ENCODE measurements at regions of chr3 and their contacts with region 1.

Region 1: DNA sequence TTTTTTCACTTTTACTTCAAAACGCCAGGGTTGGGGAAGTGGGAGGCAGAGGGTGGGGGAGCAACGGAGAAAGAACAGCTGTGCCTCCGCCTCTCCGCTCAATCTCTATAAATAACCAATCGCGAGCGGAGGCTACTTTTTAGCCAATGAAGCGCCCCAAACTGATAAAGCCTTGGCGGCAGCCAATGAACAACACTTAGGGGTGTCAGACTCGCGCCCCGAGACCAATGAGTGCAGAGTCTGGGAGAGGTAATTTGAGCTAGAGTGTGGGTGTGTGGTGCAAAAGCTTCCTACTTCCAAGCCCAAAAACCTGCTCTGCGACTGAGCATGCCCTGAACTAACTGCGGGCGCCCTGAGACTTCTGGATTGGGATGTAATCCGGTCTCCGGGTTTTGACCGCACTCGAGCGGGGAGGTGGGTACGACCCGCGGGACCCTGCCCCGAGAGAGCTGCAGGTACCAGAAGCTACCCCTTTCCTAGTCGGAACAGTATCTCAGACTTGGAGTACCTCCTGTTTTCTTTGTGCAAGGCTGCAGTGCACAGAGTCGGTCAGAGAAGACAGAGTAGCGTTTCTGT is 800 bp upstream of the RAP2B start:
- DNase-seq: peak; percentile 95
- H3K4me3 Mint-ChIP-seq: peak overlapping the region; percentile 93
- H3K27ac Mint-ChIP-seq: peak overlapping the region; percentile 98
- H3K4me1 Mint-ChIP-seq: peaks cover 26% of the 10 kb centered on the region
- H3K27me3 Mint-ChIP-seq: no peaks in the 10 kb centered on the region

Region 2: DNA sequence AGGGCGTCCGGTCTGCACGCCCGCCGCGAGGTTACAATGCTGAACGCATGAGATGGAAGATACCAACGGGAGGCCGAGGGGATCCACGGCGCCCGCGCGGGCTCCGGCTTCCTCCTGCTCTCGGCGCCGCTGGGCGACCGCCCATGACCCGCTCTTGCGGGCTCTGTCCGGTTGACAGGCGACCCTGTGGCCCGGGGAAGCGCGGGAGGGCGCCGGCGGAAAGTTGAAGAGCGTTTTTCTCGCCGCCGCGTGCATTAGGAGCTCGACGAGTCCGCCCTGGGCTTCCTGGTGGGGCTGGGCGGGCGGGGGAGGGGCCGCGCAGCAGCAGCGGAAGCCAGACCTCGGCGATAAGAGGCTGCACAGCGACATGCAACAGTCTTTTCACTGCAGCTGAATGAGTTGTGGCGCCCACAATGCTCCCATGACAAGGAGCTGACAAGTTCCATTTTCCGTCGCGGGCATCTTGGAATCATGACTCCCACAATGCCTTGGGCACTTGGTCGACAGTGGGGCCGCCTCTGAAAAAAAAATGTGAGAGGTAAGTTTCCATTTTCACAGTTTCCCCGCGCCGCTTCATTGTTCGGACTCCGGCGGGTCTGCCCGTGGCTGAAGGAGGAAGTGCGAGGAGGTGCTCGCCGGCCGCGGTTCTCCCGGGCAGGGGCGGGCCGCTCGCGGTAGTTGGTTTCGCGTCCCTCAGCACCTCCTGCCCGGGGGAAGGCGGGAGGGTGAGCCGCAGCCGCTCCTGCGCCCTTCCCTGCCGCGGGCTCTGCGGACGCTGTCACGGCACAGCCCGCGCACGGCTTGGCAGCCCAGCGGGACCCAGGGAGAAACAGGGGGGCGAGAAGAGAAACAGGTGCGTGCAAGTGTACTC is 892.4 kb before region 1 on chr3 and contains the start of gene MBNL1:
- CTCF ChIA-PET with region 1: no interaction called
- POLR2A ChIA-PET with region 1: interaction called, 3 read pairs
- intact Hi-C with region 1: loop called (anchors 10 kb)
- DNase-seq: peak; percentile 93
- H3K4me3 Mint-ChIP-seq: peak within 1 kb of the TSS; percentile 84
- H3K27ac Mint-ChIP-seq: peak within 1 kb of the TSS; percentile 84
- H3K4me1 Mint-ChIP-seq: peaks cover 52% of the 10 kb centered on the region
- H3K27me3 Mint-ChIP-seq: no peaks in the 10 kb centered on the region
- total RNA-seq, gene MBNL1: 290 to 302 TPM

Region 3: GRCh38 chr3:153080778-153081240 is 80.4 kb before region 1 on chr3:
- CTCF ChIA-PET with region 1: no interaction called
- POLR2A ChIA-PET with region 1: no interaction called
- intact Hi-C with region 1: no loop called
- DNase-seq: no peak
- H3K4me3 Mint-ChIP-seq: no peak overlapping the region
- H3K27ac Mint-ChIP-seq: no peak overlapping the region
- H3K4me1 Mint-ChIP-seq: no peaks in the 10 kb centered on the region
- H3K27me3 Mint-ChIP-seq: peaks cover 1% of the 10 kb centered on the region

Region 4: DNA sequence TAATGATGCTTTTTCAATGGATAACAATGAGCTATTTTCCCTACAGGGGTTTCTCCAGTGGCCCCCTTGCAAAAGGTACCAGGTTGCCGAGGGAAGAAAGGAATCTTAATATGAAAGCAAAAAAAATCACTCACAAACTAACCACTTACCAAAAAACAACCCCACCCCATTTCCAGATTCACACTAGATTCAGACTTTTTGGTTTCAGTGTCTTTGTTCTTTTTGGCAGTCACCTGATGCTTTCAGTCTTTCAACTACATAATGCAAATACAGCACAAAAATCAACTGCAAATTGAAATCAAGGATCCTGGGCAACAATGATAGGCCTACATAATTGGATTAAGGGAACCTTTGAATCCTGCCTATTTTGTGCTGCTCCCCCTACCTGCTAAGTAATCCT is 70.3 kb before region 1 on chr3:
- CTCF ChIA-PET with region 1: no interaction called
- POLR2A ChIA-PET with region 1: no interaction called
- intact Hi-C with region 1: loop called (anchors 1 kb)
- DNase-seq: no peak
- H3K4me3 Mint-ChIP-seq: no peak overlapping the region
- H3K27ac Mint-ChIP-seq: no peak overlapping the region
- H3K4me1 Mint-ChIP-seq: peaks cover 18% of the 10 kb centered on the region
- H3K27me3 Mint-ChIP-seq: no peaks in the 10 kb centered on the region

Region 5: DNA sequence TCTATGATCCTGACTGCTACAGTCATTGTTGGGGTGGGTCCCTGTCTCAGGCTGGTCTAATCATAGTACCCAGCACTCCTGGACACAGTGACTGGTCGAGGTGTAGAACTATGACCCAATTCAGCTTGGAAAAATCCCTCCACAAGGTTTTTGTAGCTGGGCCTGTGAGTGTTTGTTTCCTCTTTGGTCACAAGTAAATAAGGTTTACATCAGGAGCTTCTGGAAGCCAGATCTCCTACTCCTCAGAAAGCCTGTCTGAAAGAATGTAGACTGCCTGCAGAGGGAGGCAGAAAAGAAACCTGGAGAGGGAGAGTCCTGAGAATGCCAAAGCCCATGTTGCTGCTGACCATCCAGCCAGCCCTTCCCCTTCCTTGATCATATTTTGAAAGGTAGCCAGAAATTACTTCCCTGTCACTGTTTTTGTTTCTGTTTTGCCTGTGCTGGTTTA is 124.0 kb after region 1 on chr3:
- CTCF ChIA-PET with region 1: interaction called, 6 read pairs
- POLR2A ChIA-PET with region 1: interaction called, 15 read pairs
- intact Hi-C with region 1: loop called (anchors 1 kb)
- DNase-seq: no peak
- H3K4me3 Mint-ChIP-seq: no peak overlapping the region
- H3K27ac Mint-ChIP-seq: peak overlapping the region; percentile 60
- H3K4me1 Mint-ChIP-seq: peaks cover 48% of the 10 kb centered on the region
- H3K27me3 Mint-ChIP-seq: no peaks in the 10 kb centered on the region

Region 6: DNA sequence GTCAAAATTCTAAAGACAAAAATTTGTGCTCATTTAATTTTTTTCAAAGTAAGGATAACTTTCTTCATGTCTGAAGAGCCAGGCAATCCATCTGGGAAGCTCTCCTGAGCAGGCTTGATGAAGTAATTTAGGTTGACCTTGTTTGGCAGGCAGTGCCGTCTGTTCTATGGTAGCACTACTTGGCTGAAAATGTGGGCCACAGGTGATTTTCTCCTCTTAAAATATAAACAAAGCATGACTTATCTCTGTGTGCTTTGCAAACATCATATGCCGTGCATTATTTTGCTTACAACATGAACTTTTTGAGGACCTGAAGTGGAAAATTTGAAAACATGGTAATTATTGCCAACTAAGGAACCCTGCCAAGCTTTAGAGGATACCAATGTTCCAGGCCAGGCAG is 144.0 kb after region 1 on chr3:
- CTCF ChIA-PET with region 1: no interaction called
- POLR2A ChIA-PET with region 1: no interaction called
- intact Hi-C with region 1: no loop called
- DNase-seq: no peak
- H3K4me3 Mint-ChIP-seq: no peak overlapping the region
- H3K27ac Mint-ChIP-seq: no peak overlapping the region
- H3K4me1 Mint-ChIP-seq: no peaks in the 10 kb centered on the region
- H3K27me3 Mint-ChIP-seq: no peaks in the 10 kb centered on the region

Region 7: DNA sequence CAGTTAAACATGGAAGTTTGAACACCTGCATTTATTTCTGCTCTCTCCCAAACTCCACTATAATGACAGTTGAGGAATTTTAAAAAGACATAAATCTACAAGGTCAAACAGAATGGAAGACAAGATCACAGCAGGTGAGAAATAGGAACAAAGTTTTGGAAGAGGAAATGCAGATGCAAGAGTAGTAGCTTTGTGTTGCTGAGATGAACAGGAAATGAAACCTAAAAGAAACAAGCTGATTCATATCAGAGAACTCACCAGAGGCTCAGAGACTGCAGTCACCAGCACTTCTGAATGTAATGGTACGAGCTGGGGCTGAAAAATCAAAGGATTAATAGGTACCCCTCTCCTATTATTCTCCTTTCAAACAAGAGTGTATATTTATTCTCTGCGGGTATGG is 460.7 kb after region 1 on chr3:
- CTCF ChIA-PET with region 1: interaction called, 3 read pairs
- POLR2A ChIA-PET with region 1: interaction called, 8 read pairs
- intact Hi-C with region 1: loop called (anchors 1 kb)
- DNase-seq: peak; percentile 24
- H3K4me3 Mint-ChIP-seq: no peak overlapping the region
- H3K27ac Mint-ChIP-seq: peak overlapping the region; percentile 72
- H3K4me1 Mint-ChIP-seq: peaks cover 62% of the 10 kb centered on the region
- H3K27me3 Mint-ChIP-seq: no peaks in the 10 kb centered on the region

Region 8: GRCh38 chr3:154323891-154324738 is 1162.9 kb after region 1 on chr3 and contains the start of gene DHX36:
- CTCF ChIA-PET with region 1: no interaction called
- POLR2A ChIA-PET with region 1: no interaction called
- intact Hi-C with region 1: loop called (anchors 2 kb)
- DNase-seq: peak; percentile 93
- H3K4me3 Mint-ChIP-seq: peak within 1 kb of the TSS; percentile 85
- H3K27ac Mint-ChIP-seq: peak within 1 kb of the TSS; percentile 96
- H3K4me1 Mint-ChIP-seq: peaks cover 29% of the 10 kb centered on the region
- H3K27me3 Mint-ChIP-seq: no peaks in the 10 kb centered on the region
- total RNA-seq, gene DHX36: 65.5 to 71.1 TPM